CD8-positive, alpha-beta memory T cell (primary cell): ENCODE measurements at regions of chr19 and their contacts with region 1.

Region 1: GRCh38 chr19:14147797-14148605 is 11.6 kb upstream of the ASF1B start:
- DNase-seq: peak in 4 of 5 donors; percentile 30 to 56 (median 44)
- H3K4me3 ChIP-seq: no peak overlapping the region
- H3K4me3 Mint-ChIP-seq: peak overlapping the region in 6 of 7 donors; percentile 25 to 89 (median 48)
- H3K27ac ChIP-seq: peak overlapping the region; percentile 35
- H3K27ac Mint-ChIP-seq: peak overlapping the region; percentile 85 to 99 (median 97)
- H3K4me1 ChIP-seq: peaks cover 31% of the 10 kb centered on the region
- H3K4me1 Mint-ChIP-seq: peaks cover 21 to 36% (median 35%) of the 10 kb centered on the region in 3 donors
- H3K27me3 ChIP-seq: no peaks in the 10 kb centered on the region
- H3K27me3 Mint-ChIP-seq: no peaks in the 10 kb centered on the region

Region 2: GRCh38 chr19:14091081-14091812 is 56.8 kb before region 1 on chr19:
- CTCF ChIA-PET with region 1: no interaction called
- POLR2A ChIA-PET with region 1: no interaction called
- DNase-seq: peak in 4 of 5 donors; percentile 41 to 87 (median 80)
- H3K4me3 ChIP-seq: peak overlapping the region; percentile 89
- H3K4me3 Mint-ChIP-seq: peak overlapping the region; percentile 88 to 100 (median 99)
- H3K27ac ChIP-seq: peak overlapping the region; percentile 59
- H3K27ac Mint-ChIP-seq: peak overlapping the region; percentile 94 to 99 (median 98)
- H3K4me1 ChIP-seq: peaks cover 14% of the 10 kb centered on the region
- H3K4me1 Mint-ChIP-seq: peaks cover 10 to 24% (median 13%) of the 10 kb centered on the region in 3 donors
- H3K27me3 ChIP-seq: no peaks in the 10 kb centered on the region
- H3K27me3 Mint-ChIP-seq: peaks cover 0 to 4% of the 10 kb centered on the region in 2 donors

Region 3: GRCh38 chr19:14375055-14375581 is 227.1 kb after region 1 on chr19:
- CTCF ChIA-PET with region 1: no interaction called
- POLR2A ChIA-PET with region 1: interaction called, 11 read pairs
- DNase-seq: peak; percentile 77 to 95 (median 92)
- H3K4me3 ChIP-seq: peak overlapping the region; percentile 45
- H3K4me3 Mint-ChIP-seq: peak overlapping the region; percentile 73 to 90 (median 79)
- H3K27ac ChIP-seq: peak overlapping the region; percentile 100
- H3K27ac Mint-ChIP-seq: peak overlapping the region; percentile 85 to 100 (median 100)
- H3K4me1 ChIP-seq: peaks cover 71% of the 10 kb centered on the region
- H3K4me1 Mint-ChIP-seq: peaks cover 59 to 77% (median 66%) of the 10 kb centered on the region in 3 donors
- H3K27me3 ChIP-seq: no peaks in the 10 kb centered on the region
- H3K27me3 Mint-ChIP-seq: peaks cover 0 to 6% of the 10 kb centered on the region in 2 donors